AG04450 (cell line): ENCODE measurements at regions of chr4 and their contacts with region 1.

Region 1: GRCh38 chr4:139083956-139084803 is 68.6 kb downstream of the NOCT start:
- DNase-seq: peak; percentile 72
- H3K4me3 ChIP-seq: peak overlapping the region; percentile 99
- H3K27ac ChIP-seq: peak overlapping the region; percentile 93
- H3K27me3 ChIP-seq: no peaks in the 10 kb centered on the region
- CTCF ChIP-seq: peak; percentile 17; the same call in 1 of the 2 replicates

Region 2: GRCh38 chr4:139177868-139178611 is 93.9 kb after region 1 on chr4:
- CTCF ChIA-PET with region 1: interaction called, 7 read pairs
- POLR2A ChIA-PET with region 1: interaction called, 13 read pairs
- DNase-seq: peak; percentile 72
- H3K4me3 ChIP-seq: peak overlapping the region; percentile 81
- H3K27ac ChIP-seq: peak overlapping the region; percentile 87
- H3K27me3 ChIP-seq: no peaks in the 10 kb centered on the region
- CTCF ChIP-seq: no peak